ENCODE measurements at regions of chr7 and their contacts with region 1.

Region 1: DNA sequence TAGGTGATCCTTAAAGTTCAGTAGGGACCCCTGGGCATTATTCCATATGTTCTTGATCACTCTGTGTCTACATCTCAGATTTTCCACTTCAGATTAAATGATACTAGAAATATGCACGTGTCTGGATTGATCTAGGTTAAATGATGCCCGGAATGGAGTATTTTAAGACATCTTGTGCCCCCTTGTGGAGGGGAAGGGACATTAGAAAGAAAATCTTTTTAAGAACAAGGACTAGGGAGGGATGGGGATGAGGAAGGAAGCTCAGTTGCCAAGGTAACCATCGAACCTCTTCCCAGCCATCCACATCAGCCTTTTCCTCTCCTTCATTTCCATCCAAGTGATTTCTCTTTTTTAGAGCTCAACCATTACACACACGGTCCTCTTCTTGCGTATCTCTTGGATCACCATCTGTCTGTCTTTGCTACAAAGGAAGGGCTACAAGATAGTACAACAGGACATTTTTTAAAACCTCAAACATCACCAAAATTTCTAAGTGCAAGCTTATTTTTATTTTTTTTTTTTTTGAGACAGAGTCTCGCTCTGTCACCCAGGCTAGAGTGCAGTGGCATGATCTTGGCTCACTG is 40.5 kb downstream of the PRSS2 start:
- DNase-seq: no peak
- ATAC-seq: peak; percentile 22
- H3K4me3 Mint-ChIP-seq: no peak overlapping the region
- H3K27ac Mint-ChIP-seq: no peak overlapping the region; the same call in 1 of the 2 replicates
- H3K4me1 Mint-ChIP-seq: peaks cover 60% of the 10 kb centered on the region
- H3K27me3 Mint-ChIP-seq: peaks cover 12% of the 10 kb centered on the region
- CTCF ChIP-seq: peak; percentile 60

Region 2: GRCh38 chr7:142603870-142604448 is 207.3 kb before region 1 on chr7:
- CTCF ChIA-PET with region 1: interaction called, 30 read pairs
- POLR2A ChIA-PET with region 1: no interaction called
- DNase-seq: peak; percentile 60
- ATAC-seq: peak; percentile 55
- H3K4me3 Mint-ChIP-seq: no peak overlapping the region
- H3K27ac Mint-ChIP-seq: no peak overlapping the region
- H3K4me1 Mint-ChIP-seq: 0 out of 2 replicates have a peak, but pooled peaks cover 2% of the 10 kb centered on the region
- H3K27me3 Mint-ChIP-seq: no peaks in the 10 kb centered on the region; the same call in 1 of the 2 replicates
- CTCF ChIP-seq: peak; percentile 42; the same call in 1 of the 2 replicates

Region 3: GRCh38 chr7:142632291-142633134 is 178.7 kb before region 1 on chr7:
- CTCF ChIA-PET with region 1: interaction called, 85 read pairs
- POLR2A ChIA-PET with region 1: no interaction called
- DNase-seq: peak; percentile 71
- ATAC-seq: peak; percentile 98
- H3K4me3 Mint-ChIP-seq: no peak overlapping the region
- H3K27ac Mint-ChIP-seq: no peak overlapping the region
- H3K4me1 Mint-ChIP-seq: peaks cover 2% of the 10 kb centered on the region; the same call in 1 of the 2 replicates
- H3K27me3 Mint-ChIP-seq: peaks cover 13% of the 10 kb centered on the region
- CTCF ChIP-seq: peak; percentile 63

Region 4: GRCh38 chr7:142697270-142697669 is 114.0 kb before region 1 on chr7:
- CTCF ChIA-PET with region 1: no interaction called
- POLR2A ChIA-PET with region 1: no interaction called
- DNase-seq: no peak
- ATAC-seq: peak; percentile 21
- H3K4me3 Mint-ChIP-seq: peak overlapping the region; percentile 24
- H3K27ac Mint-ChIP-seq: peak overlapping the region; percentile 97
- H3K4me1 Mint-ChIP-seq: peaks cover 73% of the 10 kb centered on the region
- H3K27me3 Mint-ChIP-seq: no peaks in the 10 kb centered on the region
- CTCF ChIP-seq: no peak

Region 5: DNA sequence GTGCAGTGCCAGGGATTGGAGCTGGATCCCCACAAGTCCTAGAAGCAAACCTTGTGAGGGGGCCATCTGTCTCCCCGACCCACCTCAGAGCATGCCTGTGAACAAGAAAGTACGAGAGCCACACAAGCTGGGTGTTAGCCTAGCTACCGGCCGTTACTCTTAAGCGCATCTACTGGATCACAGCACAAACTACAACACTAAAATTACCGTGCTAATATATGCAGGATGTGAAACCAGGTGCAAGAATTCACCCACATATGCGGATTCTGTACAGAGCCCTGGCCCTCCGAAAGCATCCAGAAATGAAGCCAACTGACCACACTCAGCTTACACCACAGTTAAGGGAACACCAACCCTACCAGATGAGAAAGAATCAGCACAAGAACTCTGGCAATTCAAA is 78.0 kb before region 1 on chr7:
- CTCF ChIA-PET with region 1: no interaction called
- POLR2A ChIA-PET with region 1: no interaction called
- DNase-seq: no peak
- ATAC-seq: no peak
- H3K4me3 Mint-ChIP-seq: no peak overlapping the region
- H3K27ac Mint-ChIP-seq: no peak overlapping the region
- H3K4me1 Mint-ChIP-seq: peaks cover 6% of the 10 kb centered on the region
- H3K27me3 Mint-ChIP-seq: no peaks in the 10 kb centered on the region
- CTCF ChIP-seq: no peak

Region 6: DNA sequence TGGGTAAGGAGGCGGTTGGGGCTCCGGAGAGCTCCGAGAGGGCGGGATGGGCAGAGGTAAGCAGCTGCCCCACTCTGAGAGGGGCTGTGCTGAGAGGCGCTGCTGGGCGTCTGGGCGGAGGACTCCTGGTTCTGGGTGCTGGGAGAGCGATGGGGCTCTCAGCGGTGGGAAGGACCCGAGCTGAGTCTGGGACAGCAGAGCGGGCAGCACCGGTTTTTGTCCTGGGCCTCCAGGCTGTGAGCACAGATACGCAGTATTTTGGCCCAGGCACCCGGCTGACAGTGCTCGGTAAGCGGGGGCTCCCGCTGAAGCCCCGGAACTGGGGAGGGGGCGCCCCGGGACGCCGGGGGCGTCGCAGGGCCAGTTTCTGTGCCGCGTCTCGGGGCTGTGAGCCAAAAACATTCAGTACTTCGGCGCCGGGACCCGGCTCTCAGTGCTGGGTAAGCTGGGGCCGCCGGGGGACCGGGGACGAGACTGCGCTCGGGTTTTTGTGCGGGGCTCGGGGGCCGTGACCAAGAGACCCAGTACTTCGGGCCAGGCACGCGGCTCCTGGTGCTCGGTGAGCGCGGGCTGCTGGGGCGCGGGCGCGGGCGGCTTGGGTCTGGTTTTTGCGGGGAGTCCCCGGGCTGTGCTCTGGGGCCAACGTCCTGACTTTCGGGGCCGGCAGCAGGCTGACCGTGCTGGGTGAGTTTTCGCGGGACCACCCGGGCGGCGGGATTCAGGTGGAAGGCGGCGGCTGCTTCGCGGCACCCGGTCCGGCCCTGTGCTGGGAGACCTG is 14.4 kb before region 1 on chr7:
- CTCF ChIA-PET with region 1: interaction called, 38 read pairs
- POLR2A ChIA-PET with region 1: interaction called, 5 read pairs
- DNase-seq: peak; percentile 36
- ATAC-seq: peak; percentile 38
- H3K4me3 Mint-ChIP-seq: peak overlapping the region; percentile 86
- H3K27ac Mint-ChIP-seq: no peak overlapping the region
- H3K4me1 Mint-ChIP-seq: peaks cover 56% of the 10 kb centered on the region
- H3K27me3 Mint-ChIP-seq: peaks cover 82% of the 10 kb centered on the region
- CTCF ChIP-seq: no peak

Region 7: GRCh38 chr7:142835487-142835886 is 24.2 kb after region 1 on chr7:
- CTCF ChIA-PET with region 1: interaction called, 25 read pairs
- POLR2A ChIA-PET with region 1: no interaction called
- DNase-seq: no peak
- ATAC-seq: peak; percentile 77
- H3K4me3 Mint-ChIP-seq: no peak overlapping the region
- H3K27ac Mint-ChIP-seq: peak overlapping the region; percentile 24; the same call in 1 of the 2 replicates
- H3K4me1 Mint-ChIP-seq: peaks cover 10% of the 10 kb centered on the region
- H3K27me3 Mint-ChIP-seq: no peaks in the 10 kb centered on the region
- CTCF ChIP-seq: no peak

Region 8: DNA sequence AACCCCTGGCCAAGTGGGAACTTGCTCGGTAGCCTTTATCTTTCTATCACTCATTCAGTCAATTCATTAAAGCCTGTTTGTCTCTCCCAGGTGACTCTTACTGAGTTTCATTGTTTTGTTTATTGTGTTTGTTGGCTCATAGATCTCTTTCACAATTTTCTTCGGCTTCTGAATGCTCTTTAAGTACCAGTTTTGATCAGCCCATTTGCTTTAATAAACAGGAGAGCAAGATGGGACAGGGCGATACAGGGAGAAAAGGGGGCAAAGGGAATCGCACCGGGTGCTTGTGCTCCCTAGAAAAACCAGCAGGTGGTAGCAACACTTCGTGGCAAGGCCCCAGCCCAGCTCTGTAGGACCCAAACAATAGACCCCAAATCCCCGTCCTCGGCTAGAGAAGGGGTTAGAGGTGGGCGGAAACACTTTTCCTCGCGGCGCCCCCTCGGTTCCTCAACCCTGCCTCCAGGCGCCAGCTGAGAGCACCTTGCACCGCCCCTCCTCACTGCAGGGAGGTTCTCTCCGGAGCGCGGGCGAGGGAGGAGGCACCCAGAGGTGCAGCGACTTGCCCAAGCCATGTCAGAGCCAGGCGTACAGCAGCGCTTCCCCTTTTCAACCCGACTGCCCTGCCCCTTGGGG is 42.6 kb after region 1 on chr7:
- CTCF ChIA-PET with region 1: interaction called, 12 read pairs
- POLR2A ChIA-PET with region 1: no interaction called
- DNase-seq: peak; percentile 70
- ATAC-seq: peak; percentile 69
- H3K4me3 Mint-ChIP-seq: peak overlapping the region; percentile 94
- H3K27ac Mint-ChIP-seq: no peak overlapping the region
- H3K4me1 Mint-ChIP-seq: peaks cover 29% of the 10 kb centered on the region
- H3K27me3 Mint-ChIP-seq: peaks cover 17% of the 10 kb centered on the region
- CTCF ChIP-seq: no peak

Region 9: GRCh38 chr7:142866361-142867058 is 55.3 kb after region 1 on chr7:
- CTCF ChIA-PET with region 1: interaction called, 13 read pairs
- POLR2A ChIA-PET with region 1: interaction called, 7 read pairs
- DNase-seq: peak; percentile 80
- ATAC-seq: peak; percentile 92
- H3K4me3 Mint-ChIP-seq: no peak overlapping the region
- H3K27ac Mint-ChIP-seq: no peak overlapping the region
- H3K4me1 Mint-ChIP-seq: peaks cover 39% of the 10 kb centered on the region
- H3K27me3 Mint-ChIP-seq: no peaks in the 10 kb centered on the region; the same call in none of the 2 replicates
- CTCF ChIP-seq: peak; percentile 39; the same call in 1 of the 2 replicates

Region 10: GRCh38 chr7:142886477-142887265 is 75.4 kb after region 1 on chr7:
- CTCF ChIA-PET with region 1: no interaction called
- POLR2A ChIA-PET with region 1: no interaction called
- DNase-seq: no peak
- ATAC-seq: no peak
- H3K4me3 Mint-ChIP-seq: no peak overlapping the region
- H3K27ac Mint-ChIP-seq: no peak overlapping the region
- H3K4me1 Mint-ChIP-seq: peaks cover 8% of the 10 kb centered on the region
- H3K27me3 Mint-ChIP-seq: no peaks in the 10 kb centered on the region; the same call in 1 of the 2 replicates
- CTCF ChIP-seq: no peak